CD8-positive, alpha-beta memory T cell (primary cell): ENCODE measurements at regions of chr1 and their contacts with region 1.

Region 1: DNA sequence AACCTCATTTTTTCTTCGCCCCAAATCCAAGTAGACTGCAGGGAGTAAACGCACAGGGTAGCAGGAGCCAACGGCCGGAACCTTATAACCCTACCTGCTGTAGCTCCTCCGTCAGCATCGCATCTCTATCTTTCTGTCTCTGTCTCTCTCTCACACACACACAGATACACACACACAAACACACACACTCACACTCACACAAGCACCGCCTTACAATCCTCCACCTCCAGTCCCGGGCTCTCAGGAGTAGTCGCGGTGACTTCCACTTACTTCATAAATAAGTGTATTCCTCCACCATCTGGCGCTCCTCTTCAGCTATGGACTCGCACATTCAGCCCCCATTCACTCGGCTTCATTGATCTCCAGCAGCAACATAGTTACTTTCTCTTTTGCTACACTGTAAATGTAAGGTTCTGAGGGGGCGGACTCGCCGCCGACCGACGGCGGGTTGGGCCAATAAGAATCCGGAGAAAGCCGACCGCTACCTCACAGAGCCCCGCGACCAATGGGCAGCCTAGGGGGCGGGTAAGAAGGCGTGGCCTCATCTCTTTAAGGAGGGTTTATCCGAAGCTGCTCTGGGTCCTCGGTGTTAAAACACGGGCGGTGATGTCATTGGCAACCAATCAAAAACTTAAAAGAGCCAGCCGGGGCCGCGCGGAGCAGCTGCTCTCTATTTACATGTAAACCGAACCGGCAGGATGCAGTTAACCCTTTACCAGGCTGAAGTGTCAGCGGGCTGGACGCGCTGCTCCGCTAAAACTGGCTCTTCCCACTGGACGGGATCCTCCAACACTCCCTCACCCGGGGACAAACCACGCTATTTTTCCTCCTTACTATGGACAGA is at the start of gene DUSP10:
- DNase-seq: peak; percentile 97 to 100 (median 99)
- H3K4me3 ChIP-seq: peak within 1 kb of the TSS; percentile 91
- H3K4me3 Mint-ChIP-seq: no peak within 1 kb of the TSS
- H3K27ac ChIP-seq: peak within 1 kb of the TSS; percentile 98
- H3K27ac Mint-ChIP-seq: peak within 1 kb of the TSS in 2 of 8 donors; percentile 66 to 94
- H3K4me1 ChIP-seq: peaks cover 12% of the 10 kb centered on the region
- H3K4me1 Mint-ChIP-seq: peaks cover 7 to 27% (median 27%) of the 10 kb centered on the region in 3 donors
- H3K27me3 ChIP-seq: no peaks in the 10 kb centered on the region
- H3K27me3 Mint-ChIP-seq: no peaks in the 10 kb centered on the region
- total RNA-seq, gene DUSP10: 23.7 to 25.4 TPM

Region 2: DNA sequence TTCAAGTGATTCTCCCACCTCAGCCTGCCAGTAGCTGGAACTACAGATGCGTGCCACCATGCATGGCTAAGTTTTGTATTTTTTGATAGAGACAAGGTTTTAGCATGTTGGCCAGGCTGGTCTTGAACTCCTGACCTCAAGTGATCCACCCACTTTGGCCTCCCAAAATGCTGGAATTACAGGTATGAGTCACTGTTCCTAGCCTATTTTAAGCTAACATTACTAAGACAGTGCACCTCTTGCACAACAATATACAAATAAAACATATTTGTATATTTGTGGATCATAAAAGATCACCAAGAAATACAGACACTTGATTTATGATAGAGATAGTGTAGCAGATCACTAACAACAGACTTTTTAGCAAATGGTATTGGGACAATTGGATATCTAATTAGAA is 139.1 kb before region 1 on chr1:
- CTCF ChIA-PET with region 1: no interaction called
- POLR2A ChIA-PET with region 1: no interaction called
- DNase-seq: no peak
- H3K4me3 ChIP-seq: no peak overlapping the region
- H3K4me3 Mint-ChIP-seq: no peak overlapping the region
- H3K27ac ChIP-seq: no peak overlapping the region
- H3K27ac Mint-ChIP-seq: no peak overlapping the region
- H3K4me1 ChIP-seq: no peaks in the 10 kb centered on the region
- H3K4me1 Mint-ChIP-seq: no peaks in the 10 kb centered on the region
- H3K27me3 ChIP-seq: no peaks in the 10 kb centered on the region
- H3K27me3 Mint-ChIP-seq: peaks cover 0 to 5% of the 10 kb centered on the region in 2 donors

Region 3: GRCh38 chr1:221708987-221709386 is 32.9 kb before region 1 on chr1:
- CTCF ChIA-PET with region 1: interaction called, 45 read pairs
- POLR2A ChIA-PET with region 1: interaction called, 53 read pairs
- DNase-seq: peak; percentile 53 to 85 (median 54)
- H3K4me3 ChIP-seq: no peak overlapping the region
- H3K4me3 Mint-ChIP-seq: peak overlapping the region in 4 of 7 donors; percentile 1 to 38 (median 37)
- H3K27ac ChIP-seq: peak overlapping the region; percentile 60
- H3K27ac Mint-ChIP-seq: peak overlapping the region; percentile 39 to 97 (median 93)
- H3K4me1 ChIP-seq: peaks cover 65% of the 10 kb centered on the region
- H3K4me1 Mint-ChIP-seq: peaks cover 68 to 79% (median 72%) of the 10 kb centered on the region in 3 donors
- H3K27me3 ChIP-seq: no peaks in the 10 kb centered on the region
- H3K27me3 Mint-ChIP-seq: no peaks in the 10 kb centered on the region

Region 4: GRCh38 chr1:221725735-221726672 is 15.9 kb before region 1 on chr1:
- CTCF ChIA-PET with region 1: interaction called, 11 read pairs
- POLR2A ChIA-PET with region 1: interaction called, 6 read pairs
- DNase-seq: no peak
- H3K4me3 ChIP-seq: peak overlapping the region; percentile 13
- H3K4me3 Mint-ChIP-seq: peak overlapping the region in 6 of 7 donors; percentile 3 to 72 (median 60)
- H3K27ac ChIP-seq: no peak overlapping the region
- H3K27ac Mint-ChIP-seq: peak overlapping the region; percentile 4 to 85 (median 57)
- H3K4me1 ChIP-seq: peaks cover 33% of the 10 kb centered on the region
- H3K4me1 Mint-ChIP-seq: peaks cover 45 to 69% (median 63%) of the 10 kb centered on the region in 3 donors
- H3K27me3 ChIP-seq: no peaks in the 10 kb centered on the region
- H3K27me3 Mint-ChIP-seq: peaks cover 0 to 3% of the 10 kb centered on the region in 2 donors

Region 5: DNA sequence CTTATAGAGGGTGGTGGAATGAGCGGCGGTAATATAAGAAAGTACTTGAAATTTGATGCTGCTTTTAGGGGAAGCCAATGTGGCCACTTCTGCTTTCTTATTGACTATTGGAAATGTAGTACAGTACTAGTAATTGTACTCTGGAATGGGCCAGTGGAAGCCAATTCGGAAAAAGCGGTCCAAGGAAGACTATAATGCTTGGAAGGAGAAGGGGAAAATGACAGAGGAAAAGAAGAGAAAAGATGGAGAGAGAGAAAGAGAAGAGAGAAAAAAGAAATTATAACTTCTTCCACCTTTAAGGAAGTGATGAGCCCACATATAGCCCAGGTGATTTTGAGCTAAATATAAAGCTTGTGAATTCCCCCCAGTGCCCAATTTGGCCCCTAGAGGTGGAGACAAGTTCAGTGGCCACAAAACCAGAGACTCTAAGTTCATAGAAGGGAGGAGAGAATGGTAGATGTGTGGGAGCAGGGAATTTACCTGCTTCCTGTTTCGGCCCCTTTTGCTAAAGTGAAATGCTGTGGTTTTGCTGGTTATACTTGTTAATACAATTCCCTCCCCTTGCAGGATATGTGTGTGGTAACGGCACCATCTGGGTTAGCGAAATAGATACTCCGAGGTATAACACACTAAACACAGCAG is 35.6 kb after region 1 on chr1:
- CTCF ChIA-PET with region 1: interaction called, 8 read pairs
- POLR2A ChIA-PET with region 1: interaction called, 21 read pairs
- DNase-seq: peak; percentile 25 to 79 (median 48)
- H3K4me3 ChIP-seq: no peak overlapping the region
- H3K4me3 Mint-ChIP-seq: peak overlapping the region; percentile 0 to 83 (median 49)
- H3K27ac ChIP-seq: peak overlapping the region; percentile 52
- H3K27ac Mint-ChIP-seq: peak overlapping the region; percentile 75 to 93 (median 90)
- H3K4me1 ChIP-seq: peaks cover 45% of the 10 kb centered on the region
- H3K4me1 Mint-ChIP-seq: peaks cover 55 to 69% (median 63%) of the 10 kb centered on the region in 3 donors
- H3K27me3 ChIP-seq: no peaks in the 10 kb centered on the region
- H3K27me3 Mint-ChIP-seq: no peaks in the 10 kb centered on the region

Region 6: GRCh38 chr1:221829327-221830015 is 87.5 kb after region 1 on chr1:
- CTCF ChIA-PET with region 1: interaction called, 5 read pairs
- POLR2A ChIA-PET with region 1: interaction called, 17 read pairs
- DNase-seq: peak in 4 of 5 donors; percentile 29 to 70 (median 50)
- H3K4me3 ChIP-seq: peak overlapping the region; percentile 20
- H3K4me3 Mint-ChIP-seq: peak overlapping the region; percentile 52 to 81 (median 80)
- H3K27ac ChIP-seq: peak overlapping the region; percentile 70
- H3K27ac Mint-ChIP-seq: peak overlapping the region; percentile 76 to 98 (median 97)
- H3K4me1 ChIP-seq: peaks cover 27% of the 10 kb centered on the region
- H3K4me1 Mint-ChIP-seq: peaks cover 48 to 62% (median 56%) of the 10 kb centered on the region in 3 donors
- H3K27me3 ChIP-seq: no peaks in the 10 kb centered on the region
- H3K27me3 Mint-ChIP-seq: no peaks in the 10 kb centered on the region

Region 7: DNA sequence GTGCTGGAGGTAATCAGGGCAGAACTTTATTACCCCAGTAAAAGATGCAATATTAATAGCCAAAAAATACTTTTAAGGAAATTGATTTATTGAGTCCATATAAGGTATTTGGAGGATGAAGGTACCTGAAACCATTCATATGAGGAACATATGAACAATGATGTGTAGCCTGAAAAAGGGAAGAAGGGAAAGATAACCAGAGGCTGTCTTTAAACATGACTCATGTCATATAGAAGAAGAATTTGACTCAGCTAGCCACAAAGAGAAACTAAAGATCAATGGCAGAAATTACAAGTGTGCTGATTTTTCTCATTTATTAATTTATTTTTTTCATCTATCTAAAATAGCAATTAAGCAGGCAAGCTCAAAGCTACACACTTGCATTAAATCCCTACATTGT is 136.2 kb after region 1 on chr1:
- CTCF ChIA-PET with region 1: no interaction called
- POLR2A ChIA-PET with region 1: no interaction called
- DNase-seq: no peak
- H3K4me3 ChIP-seq: no peak overlapping the region
- H3K4me3 Mint-ChIP-seq: no peak overlapping the region
- H3K27ac ChIP-seq: no peak overlapping the region
- H3K27ac Mint-ChIP-seq: no peak overlapping the region
- H3K4me1 ChIP-seq: no peaks in the 10 kb centered on the region
- H3K4me1 Mint-ChIP-seq: no peaks in the 10 kb centered on the region
- H3K27me3 ChIP-seq: no peaks in the 10 kb centered on the region
- H3K27me3 Mint-ChIP-seq: peaks cover 0 to 4% of the 10 kb centered on the region in 2 donors

Region 8: GRCh38 chr1:222009105-222009730 is 267.3 kb after region 1 on chr1:
- CTCF ChIA-PET with region 1: interaction called, 12 read pairs
- POLR2A ChIA-PET with region 1: no interaction called
- DNase-seq: peak in 3 of 5 donors; percentile 1 to 14 (median 3)
- H3K4me3 ChIP-seq: no peak overlapping the region
- H3K4me3 Mint-ChIP-seq: peak overlapping the region in 3 of 7 donors; percentile 9 to 45 (median 20)
- H3K27ac ChIP-seq: no peak overlapping the region
- H3K27ac Mint-ChIP-seq: no peak overlapping the region
- H3K4me1 ChIP-seq: no peaks in the 10 kb centered on the region
- H3K4me1 Mint-ChIP-seq: peaks cover 0 to 6% (median 0%) of the 10 kb centered on the region in 3 donors
- H3K27me3 ChIP-seq: no peaks in the 10 kb centered on the region
- H3K27me3 Mint-ChIP-seq: peaks cover 5 to 7% of the 10 kb centered on the region in 2 donors